ENCODE measurements at regions of chr9 and their contacts with region 1.

Region 1: DNA sequence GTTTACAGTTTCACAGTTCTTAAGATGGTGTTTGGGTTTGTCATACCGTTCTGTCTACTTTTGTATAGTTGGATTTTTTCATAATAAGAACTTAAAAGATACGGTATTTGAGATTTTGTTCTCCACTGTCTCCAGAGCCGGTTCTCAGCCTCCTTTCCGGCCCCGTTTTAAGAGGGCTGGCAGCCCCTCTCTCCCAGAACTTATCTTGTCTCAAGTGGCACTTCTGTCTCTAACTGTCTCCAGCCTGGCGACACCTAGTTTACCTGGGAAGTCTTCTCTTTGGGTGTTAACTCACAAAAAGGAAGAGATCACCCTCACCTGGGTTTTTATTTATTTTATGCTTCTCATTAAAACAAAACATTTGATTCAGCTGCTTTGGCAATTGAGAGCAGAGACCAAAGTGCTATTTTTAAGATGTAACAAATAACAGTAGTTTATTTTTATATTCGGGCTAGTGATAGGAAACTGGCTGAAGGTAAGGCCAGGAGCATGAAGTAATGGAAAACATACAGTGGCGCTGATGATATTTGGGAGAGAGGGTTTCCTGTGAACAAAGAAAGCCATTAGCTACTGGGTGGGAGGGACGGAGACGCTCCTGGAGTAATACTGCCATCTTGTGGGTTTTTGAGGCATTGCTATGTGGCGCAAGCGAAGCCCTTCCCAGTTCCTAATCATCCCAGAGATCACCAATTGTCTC is 48.3 kb downstream of the ACER2 start:
- DNase-seq: peak; percentile 82
- ATAC-seq: peak; percentile 97
- H3K4me3 ChIP-seq: peak overlapping the region; percentile 50; the same call in 1 of the 2 replicates
- H3K27ac ChIP-seq: no peak overlapping the region
- H3K4me1 ChIP-seq: no peaks in the 10 kb centered on the region
- H3K27me3 ChIP-seq: no peaks in the 10 kb centered on the region
- CTCF ChIP-seq: peak; percentile 82

Region 2: GRCh38 chr9:19048966-19049916 is 407.9 kb before region 1 on chr9 and contains the start of gene RRAGA:
- CTCF ChIA-PET with region 1: interaction called, 3 read pairs
- POLR2A ChIA-PET with region 1: no interaction called
- intact Hi-C with region 1: loop called (anchors 1 kb)
- DNase-seq: peak; percentile 92
- ATAC-seq: peak; percentile 83
- H3K4me3 ChIP-seq: peak within 1 kb of the TSS; percentile 89
- H3K27ac ChIP-seq: peak within 1 kb of the TSS; percentile 68
- H3K4me1 ChIP-seq: peaks cover 15% of the 10 kb centered on the region; the same call in 1 of the 2 replicates
- H3K27me3 ChIP-seq: no peaks in the 10 kb centered on the region
- CTCF ChIP-seq: peak; percentile 76
- total RNA-seq, gene RRAGA: 13.0 and 16.8 TPM in 2 replicates

Region 3: GRCh38 chr9:19174127-19174912 is 282.8 kb before region 1 on chr9:
- CTCF ChIA-PET with region 1: interaction called, 3 read pairs
- POLR2A ChIA-PET with region 1: no interaction called
- intact Hi-C with region 1: loop called (anchors 2 kb)
- DNase-seq: peak; percentile 69
- ATAC-seq: peak; percentile 96
- H3K4me3 ChIP-seq: peak overlapping the region; percentile 61
- H3K27ac ChIP-seq: no peak overlapping the region
- H3K4me1 ChIP-seq: 0 out of 2 replicates have a peak, but pooled peaks cover 8% of the 10 kb centered on the region
- H3K27me3 ChIP-seq: no peaks in the 10 kb centered on the region
- CTCF ChIP-seq: peak; percentile 57

Region 4: GRCh38 chr9:19371942-19372341 is 85.2 kb before region 1 on chr9:
- CTCF ChIA-PET with region 1: no interaction called
- POLR2A ChIA-PET with region 1: interaction called, 7 read pairs
- intact Hi-C with region 1: loop called (anchors 1 kb)
- DNase-seq: peak; percentile 23
- ATAC-seq: peak; percentile 68
- H3K4me3 ChIP-seq: no peak overlapping the region
- H3K27ac ChIP-seq: no peak overlapping the region
- H3K4me1 ChIP-seq: no peaks in the 10 kb centered on the region
- H3K27me3 ChIP-seq: no peaks in the 10 kb centered on the region
- CTCF ChIP-seq: 0 out of 2 replicates have a peak, but pooled peaks have one; percentile 20

Region 5: GRCh38 chr9:19379697-19380046 is 77.5 kb before region 1 on chr9:
- CTCF ChIA-PET with region 1: no interaction called
- POLR2A ChIA-PET with region 1: interaction called, 7 read pairs
- intact Hi-C with region 1: loop called (anchors 2 kb)
- DNase-seq: no peak
- ATAC-seq: peak; percentile 14
- H3K4me3 ChIP-seq: peak overlapping the region; percentile 94
- H3K27ac ChIP-seq: peak overlapping the region; percentile 50
- H3K4me1 ChIP-seq: 0 out of 2 replicates have a peak, but pooled peaks cover 21% of the 10 kb centered on the region
- H3K27me3 ChIP-seq: no peaks in the 10 kb centered on the region
- CTCF ChIP-seq: no peak

Region 6: GRCh38 chr9:19408693-19409400 is 48.3 kb before region 1 on chr9 and contains the start of gene ACER2:
- CTCF ChIA-PET with region 1: no interaction called
- POLR2A ChIA-PET with region 1: no interaction called
- intact Hi-C with region 1: loop called (anchors 2 kb)
- DNase-seq: peak; percentile 93
- ATAC-seq: peak; percentile 85
- H3K4me3 ChIP-seq: peak within 1 kb of the TSS; percentile 92
- H3K27ac ChIP-seq: peak within 1 kb of the TSS; percentile 36
- H3K4me1 ChIP-seq: peaks cover 34% of the 10 kb centered on the region
- H3K27me3 ChIP-seq: no peaks in the 10 kb centered on the region
- CTCF ChIP-seq: no peak
- total RNA-seq, gene ACER2: 2.4 and 4.4 TPM in 2 replicates